ENCODE measurements at regions of chr2 and their contacts with region 1.

Region 1: GRCh38 chr2:195923889-195924288 is 144.7 kb downstream of the DNAH7 start:
- DNase-seq: no peak
- H3K4me3 ChIP-seq: no peak overlapping the region
- H3K27ac ChIP-seq: no peak overlapping the region
- H3K4me1 ChIP-seq: no peaks in the 10 kb centered on the region
- H3K27me3 ChIP-seq: no peaks in the 10 kb centered on the region
- CTCF ChIP-seq: no peak
- EP300 ChIP-seq: no peak
- POLR2A ChIP-seq: no peak

Region 2: DNA sequence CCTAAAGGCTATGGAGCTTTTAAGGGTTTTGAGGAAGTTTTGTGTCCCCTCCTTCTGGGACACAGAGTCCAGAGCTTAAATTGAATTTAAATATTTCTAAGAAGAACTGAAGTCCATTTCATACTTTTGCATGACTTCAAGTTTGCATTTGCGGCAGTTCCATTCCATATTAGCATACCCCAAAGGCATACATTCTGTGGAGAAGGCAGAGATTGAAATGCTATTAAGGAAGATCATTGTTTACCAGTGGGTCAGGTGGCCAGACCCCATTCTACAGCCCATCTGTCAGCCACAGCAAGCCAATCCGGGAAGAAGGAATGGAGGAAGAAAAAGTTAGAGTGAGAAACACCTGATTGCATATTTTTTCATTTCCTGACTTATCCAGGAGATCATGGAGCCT is 69.7 kb after region 1 on chr2:
- in situ Hi-C with region 1: no loop called
- intact Hi-C with region 1: loop called (anchors 2 kb)
- DNase-seq: no peak
- H3K4me3 ChIP-seq: no peak overlapping the region
- H3K27ac ChIP-seq: no peak overlapping the region
- H3K4me1 ChIP-seq: peaks cover 0 to 4% (median 0%) of the 10 kb centered on the region in 4 donors
- H3K27me3 ChIP-seq: no peaks in the 10 kb centered on the region
- CTCF ChIP-seq: no peak
- EP300 ChIP-seq: no peak
- POLR2A ChIP-seq: no peak

Region 3: DNA sequence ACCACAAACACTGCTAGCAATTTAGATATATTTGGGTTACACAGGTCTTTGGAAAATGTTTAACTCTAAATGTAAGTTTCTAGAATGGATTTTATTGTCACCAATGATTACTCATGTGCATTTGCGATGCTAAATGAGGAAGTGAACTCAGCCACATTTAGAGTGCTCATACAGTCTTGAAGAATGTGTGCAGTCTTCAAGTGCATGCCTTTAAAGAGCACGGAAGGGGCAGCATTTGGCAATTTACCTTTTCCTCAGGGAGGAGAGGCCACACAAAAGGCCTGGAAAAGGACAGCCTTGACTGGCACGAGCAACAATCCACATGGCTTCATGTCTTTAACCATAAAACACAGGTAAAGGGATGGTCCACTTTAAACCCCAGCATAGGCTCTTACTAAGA is 326.0 kb after region 1 on chr2:
- in situ Hi-C with region 1: no loop called
- intact Hi-C with region 1: no loop called
- DNase-seq: peak; percentile 19
- H3K4me3 ChIP-seq: no peak overlapping the region
- H3K27ac ChIP-seq: peak overlapping the region in 3 of 4 donors; percentile 13 to 59 (median 58)
- H3K4me1 ChIP-seq: peaks cover 0 to 30% (median 13%) of the 10 kb centered on the region in 4 donors
- H3K27me3 ChIP-seq: no peaks in the 10 kb centered on the region
- CTCF ChIP-seq: no peak
- EP300 ChIP-seq: no peak
- POLR2A ChIP-seq: no peak